Gastrocnemius medialis (tissue), 4 donors: ENCODE measurements at regions of chr19 and their contacts with region 1.

Region 1: GRCh38 chr19:57559404-57560025 is at the start of gene ZNF550:
- DNase-seq: peak; percentile 82 to 88
- ATAC-seq: peak; percentile 96 to 98
- H3K4me3 ChIP-seq: peak within 1 kb of the TSS; percentile 82 to 96 (median 90)
- H3K27ac ChIP-seq: peak within 1 kb of the TSS; percentile 69 to 86 (median 74)
- H3K4me1 ChIP-seq: peaks cover 16 to 26% of the 10 kb centered on the region in 2 donors
- H3K27me3 ChIP-seq: no peaks in the 10 kb centered on the region
- CTCF ChIP-seq: no peak
- POLR2A ChIP-seq: peak in 1 of 2 donors; percentile 51
- total RNA-seq, gene ZNF550: 0.87 to 9.1 (median 2.6) TPM

Region 2: DNA sequence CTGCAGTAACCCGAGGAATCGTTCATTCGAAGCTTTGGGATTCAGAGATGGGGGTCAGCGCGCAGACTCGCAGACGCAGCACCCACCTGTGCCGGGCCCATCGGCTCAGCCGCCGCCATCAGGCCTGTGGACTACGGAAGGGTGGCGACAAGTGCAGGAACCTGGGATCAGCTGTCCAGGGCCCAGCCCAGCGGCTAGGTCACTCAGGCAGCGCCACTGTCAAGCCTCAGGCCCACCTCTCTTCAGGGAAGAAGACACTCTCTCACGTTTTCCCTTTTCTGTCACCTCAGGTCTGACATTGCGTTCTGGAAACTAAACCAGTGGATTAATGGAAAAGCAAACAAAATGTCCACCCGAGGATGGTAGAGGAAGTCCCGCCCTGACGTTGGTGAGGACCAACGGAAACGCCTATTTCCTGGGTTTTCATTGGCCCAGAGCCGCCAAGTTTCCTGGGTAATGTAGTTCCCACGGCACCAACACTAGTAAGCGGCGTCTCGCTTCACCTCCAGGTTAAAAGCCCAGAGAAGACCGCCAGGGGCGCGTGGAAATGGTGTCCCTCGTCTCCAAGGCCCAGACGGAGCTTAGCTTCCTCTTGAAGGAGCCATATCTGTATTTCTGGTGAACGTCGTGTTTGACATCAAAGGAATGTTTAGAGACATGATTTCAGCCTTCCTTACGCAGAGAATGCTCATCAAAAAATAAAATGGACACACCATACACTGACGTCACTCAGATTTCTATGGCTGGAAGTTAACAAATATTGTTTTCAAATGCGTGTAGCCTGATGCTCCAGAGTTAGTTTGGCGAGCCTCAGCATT is 82.1 kb before region 1 on chr19 and contains the start of gene ZNF772:
- in situ Hi-C with region 1: no loop called
- intact Hi-C with region 1: loop called (anchors 5 kb)
- DNase-seq: peak; percentile 89 to 91
- ATAC-seq: peak; percentile 100
- H3K4me3 ChIP-seq: peak within 1 kb of the TSS; percentile 79 to 84 (median 81)
- H3K27ac ChIP-seq: peak within 1 kb of the TSS; percentile 79 to 91 (median 86)
- H3K4me1 ChIP-seq: peaks cover 12 to 13% of the 10 kb centered on the region in 2 donors
- H3K27me3 ChIP-seq: no peaks in the 10 kb centered on the region
- CTCF ChIP-seq: peak; percentile 47 to 70 (median 61)
- POLR2A ChIP-seq: peak in 1 of 2 donors; percentile 20
- total RNA-seq, gene ZNF772: 8.3 to 26.7 (median 17.6) TPM

Region 3: GRCh38 chr19:57599761-57600383 is 40.4 kb after region 1 on chr19 and contains the start of gene ZNF530:
- in situ Hi-C with region 1: no loop called
- intact Hi-C with region 1: loop called (anchors 1 kb)
- DNase-seq: peak; percentile 89 to 91
- ATAC-seq: peak; percentile 100
- H3K4me3 ChIP-seq: peak within 1 kb of the TSS; percentile 76 to 98 (median 79)
- H3K27ac ChIP-seq: peak within 1 kb of the TSS; percentile 22 to 70 (median 50)
- H3K4me1 ChIP-seq: peaks cover 7 to 9% of the 10 kb centered on the region in 2 donors
- H3K27me3 ChIP-seq: no peaks in the 10 kb centered on the region
- CTCF ChIP-seq: no peak
- POLR2A ChIP-seq: no peak
- total RNA-seq, gene ZNF530: 0.86 to 4.2 (median 3.4) TPM

Region 4: DNA sequence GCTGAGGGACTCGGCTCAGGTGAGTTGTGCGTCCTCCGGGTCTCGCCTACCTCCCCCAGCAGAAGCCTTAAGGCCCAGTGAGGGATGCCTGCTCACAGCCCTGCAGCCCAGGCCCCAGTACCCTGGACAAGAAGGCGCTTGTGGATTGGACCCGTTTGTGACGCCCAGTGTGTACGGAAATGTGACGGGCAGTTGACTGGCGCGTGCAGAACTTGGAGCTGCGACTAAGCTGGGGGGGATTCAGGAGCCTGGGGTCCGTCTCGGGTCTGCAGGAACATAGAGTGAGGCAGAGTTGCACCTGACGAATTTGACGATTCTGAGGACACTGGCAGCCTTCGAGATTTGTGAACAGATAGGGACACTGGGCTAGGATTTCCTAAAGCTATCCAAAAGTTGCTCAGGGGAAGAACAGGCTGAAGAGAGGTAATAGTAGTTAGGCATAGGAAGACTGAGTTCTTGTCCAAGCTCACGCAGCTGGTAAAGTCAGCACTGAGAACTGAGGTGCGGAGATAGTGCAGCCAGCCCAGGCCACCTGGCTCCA is 122.8 kb after region 1 on chr19:
- in situ Hi-C with region 1: no loop called
- intact Hi-C with region 1: no loop called
- DNase-seq: no peak
- ATAC-seq: peak; percentile 22 to 27
- H3K4me3 ChIP-seq: peak overlapping the region; percentile 74 to 99 (median 88)
- H3K27ac ChIP-seq: peak overlapping the region; percentile 55 to 82 (median 68)
- H3K4me1 ChIP-seq: peaks cover 10 to 14% of the 10 kb centered on the region in 2 donors
- H3K27me3 ChIP-seq: no peaks in the 10 kb centered on the region
- CTCF ChIP-seq: no peak
- POLR2A ChIP-seq: no peak